ENCODE measurements at regions of chr20 and their contacts with region 1.

Region 1: DNA sequence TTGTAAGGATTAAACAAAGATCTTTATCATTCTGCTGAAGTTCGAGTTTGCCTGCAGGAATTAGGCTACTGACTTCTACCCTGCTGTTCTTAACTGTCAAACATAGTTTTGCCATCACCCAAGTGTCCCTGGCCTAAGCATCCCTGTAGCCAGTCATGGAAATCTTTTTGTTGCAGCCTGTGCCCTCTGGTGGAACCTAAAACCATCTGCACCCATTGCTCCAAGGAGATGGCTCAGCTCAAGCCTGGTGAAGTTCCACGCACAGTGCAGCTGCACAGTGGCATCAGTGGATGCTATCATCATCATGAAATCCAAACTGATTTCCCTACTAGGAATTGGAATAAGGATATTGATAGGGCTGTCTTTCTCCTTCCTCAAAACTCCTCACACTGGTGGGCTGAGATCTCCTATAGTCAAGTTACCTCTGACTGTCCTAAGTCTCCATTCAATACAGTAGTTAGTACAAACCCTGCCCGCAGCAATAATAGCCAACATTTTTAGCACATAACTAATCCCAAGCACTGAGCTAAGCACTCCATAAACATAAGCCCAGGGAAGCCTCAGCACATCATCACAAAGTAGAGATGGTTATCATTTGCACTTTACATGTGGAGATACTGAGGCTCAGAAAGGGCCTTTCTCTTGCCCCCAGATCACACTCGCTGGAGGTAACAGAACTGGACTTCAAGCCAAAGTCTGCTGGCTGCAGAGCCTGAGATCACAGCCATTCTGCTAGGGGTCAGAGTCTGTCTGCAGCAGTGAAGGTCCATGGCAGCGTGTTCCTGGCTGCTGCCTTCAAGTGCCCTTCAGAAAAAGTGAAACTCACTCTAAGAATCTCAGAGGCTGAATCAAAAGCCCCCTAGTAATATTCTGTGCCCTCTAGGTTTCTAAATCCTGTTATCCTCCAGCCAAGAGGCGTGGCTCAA is 77.2 kb upstream of the MC3R start:
- DNase-seq: peak; percentile 5
- H3K4me3 ChIP-seq: no peak overlapping the region
- H3K27ac ChIP-seq: no peak overlapping the region
- H3K4me1 ChIP-seq: no peaks in the 10 kb centered on the region
- H3K27me3 ChIP-seq: peaks cover 5% of the 10 kb centered on the region
- CTCF ChIP-seq: peak in 2 of 4 experiments; percentile 35 to 46
- POLR2A ChIP-seq: no peak

Region 2: DNA sequence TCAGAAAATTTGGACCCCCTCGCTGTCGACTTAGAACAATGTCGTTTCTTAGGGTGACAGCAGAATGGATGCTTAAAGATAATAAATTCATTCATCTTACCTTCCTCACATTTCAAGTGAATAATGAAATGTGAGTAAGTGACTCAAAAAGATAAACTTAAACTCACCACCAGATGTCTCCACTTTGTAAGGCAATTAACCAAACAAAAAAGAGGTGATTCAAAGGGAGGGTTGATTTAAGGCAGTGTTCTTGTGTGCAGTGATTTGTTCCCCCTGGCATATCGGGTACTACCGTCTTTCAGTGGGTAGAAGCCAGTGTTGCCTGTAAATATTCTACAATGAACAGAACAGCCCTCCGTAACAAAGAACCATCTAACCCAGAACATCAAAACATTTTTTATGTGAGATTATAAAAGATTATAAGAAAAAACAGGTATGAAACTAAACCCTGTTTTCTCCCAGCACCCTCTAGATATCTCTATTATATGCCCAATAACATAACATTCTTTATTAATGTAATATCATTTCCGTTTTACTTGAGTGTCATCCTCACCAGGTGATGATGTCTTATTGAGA is 755.7 kb before region 1 on chr20:
- intact Hi-C with region 1: loop called (anchors 10 kb)
- DNase-seq: no peak
- H3K4me3 ChIP-seq: no peak overlapping the region
- H3K27ac ChIP-seq: no peak overlapping the region
- H3K4me1 ChIP-seq: no peaks in the 10 kb centered on the region
- H3K27me3 ChIP-seq: no peaks in the 10 kb centered on the region
- CTCF ChIP-seq: peak in 3 of 4 experiments; percentile 24 to 48 (median 25)
- POLR2A ChIP-seq: no peak

Region 3: DNA sequence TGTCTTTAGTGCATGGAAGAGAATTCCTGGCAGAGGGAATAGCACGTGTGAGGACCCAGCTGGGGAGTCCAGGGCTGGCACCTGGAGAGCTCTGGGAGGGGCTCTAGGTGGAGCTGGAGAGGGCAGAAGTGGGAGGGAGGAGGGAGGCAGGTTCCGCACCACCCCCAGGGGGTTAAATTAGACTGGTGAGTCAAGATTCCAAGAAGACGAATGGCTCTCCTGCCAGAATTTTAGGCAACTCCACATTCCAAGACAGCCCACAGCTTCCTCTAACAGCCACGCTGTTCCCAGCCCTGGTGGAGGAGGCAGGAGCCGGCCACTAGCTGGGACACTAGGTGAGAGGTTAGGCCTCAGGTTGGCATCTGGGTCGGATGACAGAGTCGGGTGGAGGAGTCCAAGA is 517.9 kb after region 1 on chr20:
- intact Hi-C with region 1: no loop called
- DNase-seq: peak; percentile 7
- H3K4me3 ChIP-seq: no peak overlapping the region
- H3K27ac ChIP-seq: no peak overlapping the region
- H3K4me1 ChIP-seq: no peaks in the 10 kb centered on the region
- H3K27me3 ChIP-seq: peaks cover 6% of the 10 kb centered on the region
- CTCF ChIP-seq: no peak
- POLR2A ChIP-seq: no peak

Measured in prostate gland (tissue), 2 donors.